Left ventricle myocardium superior (tissue), 1 donor: ENCODE measurements at regions of chr20 and their contacts with region 1.

Region 1: GRCh38 chr20:25076731-25077609 is 5.0 kb downstream of the VSX1 start:
- DNase-seq: no peak
- ATAC-seq: peak; percentile 73

Region 2: DNA sequence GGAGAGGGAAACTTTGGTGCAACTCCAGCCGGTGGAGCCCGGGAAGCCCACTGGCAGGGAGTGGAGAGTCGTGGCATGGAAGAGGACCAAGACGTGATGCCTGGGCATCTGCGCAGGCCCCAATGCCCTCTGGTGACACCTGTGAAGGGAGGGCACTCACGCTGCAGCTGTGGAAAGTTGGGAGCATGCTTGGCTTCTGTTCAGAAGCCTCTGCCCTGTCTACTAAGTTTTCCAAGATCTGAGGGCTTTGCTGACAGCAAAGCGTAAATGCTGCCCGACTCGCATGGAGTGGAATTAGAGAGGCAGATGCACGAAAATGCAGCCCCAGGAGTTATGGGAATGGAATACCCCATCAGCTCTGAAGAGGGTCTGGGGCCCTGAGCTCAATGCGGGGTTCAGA is 531.8 kb before region 1 on chr20:
- intact Hi-C with region 1: no loop called
- DNase-seq: no peak
- ATAC-seq: peak; percentile 89

Region 3: GRCh38 chr20:25178563-25179438 is 101.8 kb after region 1 on chr20:
- intact Hi-C with region 1: loop called (anchors 10 kb)
- DNase-seq: no peak
- ATAC-seq: peak; percentile 89

Region 4: DNA sequence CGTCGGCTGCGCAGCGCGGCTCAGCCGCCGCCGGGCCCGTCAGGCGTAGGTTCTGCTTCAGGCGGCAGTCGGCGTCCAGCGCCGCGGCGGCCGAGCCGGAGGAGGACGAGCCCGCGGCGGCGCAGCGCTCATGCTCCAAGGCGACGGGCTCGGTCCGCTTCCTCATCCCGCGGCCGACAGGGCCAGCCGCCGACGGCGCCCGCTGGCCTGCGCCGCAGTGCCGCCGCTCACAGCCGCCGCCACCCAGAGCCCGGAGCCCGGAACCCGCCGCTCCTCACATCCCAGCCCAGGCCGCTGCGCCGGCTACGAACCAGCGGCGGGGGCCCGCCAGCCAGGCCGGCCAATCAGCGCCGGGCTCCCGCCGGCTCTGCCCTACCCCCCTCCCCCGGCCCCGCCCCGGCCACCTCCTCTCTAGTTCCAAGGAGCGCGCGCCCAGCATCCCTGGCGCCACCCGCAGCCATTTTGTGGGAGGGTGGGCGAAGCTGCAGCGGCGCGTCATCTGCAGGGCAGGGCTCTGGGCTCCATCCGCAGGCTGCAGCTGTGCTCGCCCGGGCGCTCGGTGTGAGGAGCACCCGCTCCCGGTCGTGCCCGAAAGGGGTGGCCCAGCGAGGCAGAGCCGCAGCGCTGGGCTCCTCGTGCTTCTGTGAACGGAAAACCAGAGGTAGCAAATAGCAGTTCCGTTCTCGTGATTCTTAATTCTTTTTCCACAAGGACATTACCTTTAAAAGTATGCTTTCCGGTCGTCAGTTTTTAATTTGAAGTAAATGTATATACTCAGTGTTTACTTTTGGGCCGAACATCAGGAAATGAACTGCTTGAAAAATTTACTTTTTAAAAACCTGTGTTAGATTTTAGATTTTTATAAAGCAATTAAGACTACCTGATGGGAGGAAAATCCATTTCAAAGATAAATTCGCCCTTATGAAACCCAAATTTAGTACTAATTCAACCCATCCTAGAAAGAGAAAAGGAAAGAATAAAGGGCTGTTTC is 313.9 kb after region 1 on chr20 and contains the start of gene ABHD12:
- intact Hi-C with region 1: loop called (anchors 10 kb)
- DNase-seq: peak; percentile 98
- ATAC-seq: peak; percentile 99
- total RNA-seq, gene ABHD12: 21.3 TPM